Posterior vena cava (tissue), 2 donors: ENCODE measurements at regions of chr19 and their contacts with region 1.

Region 1: GRCh38 chr19:31127134-31127967 is 221.9 kb downstream of the TSHZ3 start:
- DNase-seq: peak; percentile 83

Region 2: DNA sequence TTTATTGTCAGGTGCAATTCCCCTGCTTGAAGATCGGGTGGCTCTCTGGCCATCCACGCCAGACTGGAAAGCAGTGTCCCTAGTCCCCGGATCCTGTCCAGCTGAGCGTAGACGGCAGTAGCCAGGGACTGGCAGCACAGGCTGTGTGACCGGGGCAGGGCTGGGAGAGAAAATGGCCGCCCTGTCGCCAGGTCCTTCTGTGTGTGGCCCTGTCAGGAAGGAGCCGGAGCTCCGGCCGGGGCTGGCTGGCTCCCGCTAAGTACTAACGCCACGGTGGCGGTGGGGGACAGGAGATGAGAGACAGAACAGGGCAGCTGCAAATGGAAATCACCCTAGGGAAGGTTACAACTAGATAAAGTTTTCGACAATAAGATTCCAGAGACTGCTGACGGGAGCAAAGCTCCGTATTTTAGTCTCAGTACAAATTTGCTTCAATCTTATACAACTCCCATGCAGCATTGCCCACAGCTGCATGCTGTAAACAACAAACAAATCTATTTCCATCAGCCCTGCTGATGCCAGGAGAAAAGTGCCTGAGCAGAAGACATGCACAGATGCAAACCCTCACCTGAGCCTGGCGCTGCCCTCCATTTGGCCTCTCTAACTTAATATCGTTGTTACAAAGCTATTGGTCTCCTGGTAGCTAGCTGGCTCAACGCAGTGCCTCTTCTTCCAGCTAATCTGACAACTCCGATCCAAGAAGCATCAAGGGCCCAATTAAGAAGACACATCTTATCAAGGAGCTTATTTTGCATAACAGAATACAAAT is 31.1 kb before region 1 on chr19:
- intact Hi-C with region 1: loop called in 1 of 2 experiments (anchors 1 kb)
- DNase-seq: no peak

Region 3: GRCh38 chr19:31164791-31165201 is 37.4 kb after region 1 on chr19:
- intact Hi-C with region 1: no loop called
- DNase-seq: no peak